ENCODE measurements at regions of chr17 and their contacts with region 1.

Region 1: GRCh38 chr17:77451245-77451893 is 310.6 kb downstream of the SEC14L1 start:
- DNase-seq: peak; percentile 84
- ATAC-seq: peak; percentile 80
- H3K4me3 Mint-ChIP-seq: peak overlapping the region; percentile 84
- H3K27ac Mint-ChIP-seq: peak overlapping the region; percentile 83
- H3K4me1 Mint-ChIP-seq: peaks cover 69% of the 10 kb centered on the region
- H3K27me3 Mint-ChIP-seq: no peaks in the 10 kb centered on the region
- CTCF ChIP-seq: no peak

Region 2: DNA sequence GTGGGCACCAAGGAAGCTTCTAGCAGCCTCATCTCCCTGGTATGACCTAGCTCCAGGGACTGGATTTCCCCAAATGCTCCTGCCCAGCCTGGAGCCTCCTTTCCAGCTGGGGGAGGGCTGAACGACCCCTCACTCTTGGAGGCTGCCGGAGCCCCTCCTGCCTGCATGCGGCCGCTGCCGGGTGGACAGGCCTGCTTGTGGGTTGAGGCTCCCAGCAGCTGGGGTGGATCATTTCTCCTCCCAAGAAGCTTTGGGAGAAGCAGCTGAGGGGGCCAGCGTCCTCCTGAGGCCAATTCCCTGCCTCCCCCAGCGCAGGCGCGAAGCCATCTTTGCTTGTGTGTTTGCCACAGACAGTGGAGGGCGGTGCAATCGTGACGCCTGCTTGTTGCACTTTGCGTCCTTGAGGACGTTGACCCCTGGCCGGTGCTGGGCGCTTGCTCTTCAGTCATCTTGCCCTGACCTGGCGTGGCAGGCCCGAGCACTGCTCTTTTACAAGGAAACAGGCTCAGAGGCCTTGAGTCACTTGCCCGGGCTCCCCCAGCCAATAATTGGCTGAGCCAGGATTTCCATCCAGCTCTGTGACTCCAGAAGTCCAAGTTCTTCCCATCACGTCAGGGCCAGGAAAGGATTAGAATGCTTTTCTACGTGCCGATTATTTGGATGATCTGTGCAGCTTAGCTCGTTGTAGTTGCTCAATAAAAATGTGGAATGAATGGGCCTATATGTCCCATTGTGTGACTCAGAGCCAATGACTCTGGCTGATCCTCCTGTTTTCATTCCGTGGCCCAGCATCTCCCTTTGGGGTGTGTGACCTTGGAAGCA is 96.7 kb before region 1 on chr17:
- CTCF ChIA-PET with region 1: no interaction called
- POLR2A ChIA-PET with region 1: no interaction called
- DNase-seq: no peak
- ATAC-seq: no peak
- H3K4me3 Mint-ChIP-seq: no peak overlapping the region
- H3K27ac Mint-ChIP-seq: peak overlapping the region; percentile 28
- H3K4me1 Mint-ChIP-seq: peaks cover 27% of the 10 kb centered on the region
- H3K27me3 Mint-ChIP-seq: no peaks in the 10 kb centered on the region
- CTCF ChIP-seq: no peak

Region 3: DNA sequence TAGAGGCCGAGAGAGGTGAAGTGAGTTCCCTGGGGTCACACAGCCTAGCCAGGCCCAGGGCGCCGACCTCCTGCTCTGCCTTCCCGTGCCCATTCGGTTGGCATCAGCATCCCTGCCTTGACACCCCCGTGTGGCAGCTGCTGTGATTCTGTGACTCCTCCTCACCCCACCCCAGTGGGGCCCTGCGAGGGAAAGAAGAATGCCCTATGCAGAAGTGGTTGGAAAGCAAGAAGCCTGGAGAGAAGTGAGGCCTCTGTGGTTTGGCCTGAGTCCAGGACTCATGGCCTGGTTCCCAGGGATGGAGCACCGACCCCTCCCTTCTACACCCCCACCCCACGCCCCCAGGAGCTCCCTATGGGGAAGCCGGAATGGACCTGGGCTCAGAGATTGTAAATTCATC is 14.4 kb before region 1 on chr17:
- CTCF ChIA-PET with region 1: interaction called, 11 read pairs
- POLR2A ChIA-PET with region 1: interaction called, 3 read pairs
- DNase-seq: no peak
- ATAC-seq: no peak
- H3K4me3 Mint-ChIP-seq: no peak overlapping the region
- H3K27ac Mint-ChIP-seq: no peak overlapping the region
- H3K4me1 Mint-ChIP-seq: peaks cover 69% of the 10 kb centered on the region
- H3K27me3 Mint-ChIP-seq: no peaks in the 10 kb centered on the region
- CTCF ChIP-seq: no peak

Region 4: DNA sequence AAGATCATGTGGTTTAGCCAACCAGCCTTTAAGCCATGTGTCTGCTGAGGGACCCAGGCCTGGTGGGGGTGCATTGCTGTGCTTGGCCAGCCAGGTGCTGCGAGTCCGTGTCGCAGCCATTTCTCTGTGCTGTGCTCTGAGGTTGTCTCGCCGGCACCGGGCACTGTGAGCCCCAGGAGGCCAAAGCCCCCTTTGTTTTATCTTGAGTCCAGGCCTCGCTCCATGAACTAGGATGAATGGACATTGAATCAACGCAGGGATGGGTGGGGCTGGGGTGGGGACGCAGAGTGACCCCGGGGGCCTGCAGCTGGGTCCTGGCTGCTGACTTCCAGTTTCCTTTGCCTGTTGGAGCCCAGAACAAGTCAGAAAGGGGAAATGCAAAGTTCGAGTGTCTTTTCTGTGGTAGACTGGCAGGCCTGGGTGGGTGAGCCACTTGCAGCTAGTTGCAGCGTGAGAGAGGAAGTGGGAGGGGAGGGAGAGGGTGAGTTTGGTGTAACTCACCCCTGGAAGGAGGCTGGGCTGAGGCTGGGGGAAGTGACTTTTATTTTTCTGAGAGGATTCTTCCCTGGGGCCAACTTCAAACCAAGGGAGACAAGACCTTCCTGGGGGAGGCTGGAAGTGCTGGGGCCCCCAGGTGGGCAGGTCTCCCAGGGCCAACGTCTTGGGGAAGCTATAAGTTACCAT is 14.1 kb after region 1 on chr17:
- CTCF ChIA-PET with region 1: interaction called, 4 read pairs
- POLR2A ChIA-PET with region 1: interaction called, 14 read pairs
- DNase-seq: no peak
- ATAC-seq: peak; percentile 29
- H3K4me3 Mint-ChIP-seq: peak overlapping the region; percentile 54
- H3K27ac Mint-ChIP-seq: peak overlapping the region; percentile 100
- H3K4me1 Mint-ChIP-seq: peaks cover 68% of the 10 kb centered on the region
- H3K27me3 Mint-ChIP-seq: no peaks in the 10 kb centered on the region
- CTCF ChIP-seq: no peak

Region 5: GRCh38 chr17:77640252-77640651 is 188.9 kb after region 1 on chr17:
- CTCF ChIA-PET with region 1: no interaction called
- POLR2A ChIA-PET with region 1: interaction called, 12 read pairs
- DNase-seq: no peak
- ATAC-seq: no peak; the same call in 1 of the 2 replicates
- H3K4me3 Mint-ChIP-seq: no peak overlapping the region
- H3K27ac Mint-ChIP-seq: no peak overlapping the region
- H3K4me1 Mint-ChIP-seq: peaks cover 28% of the 10 kb centered on the region
- H3K27me3 Mint-ChIP-seq: peaks cover 9% of the 10 kb centered on the region
- CTCF ChIP-seq: no peak